CD14-positive monocyte (primary cell): ENCODE measurements at regions of chr2 and their contacts with region 1.

Region 1: DNA sequence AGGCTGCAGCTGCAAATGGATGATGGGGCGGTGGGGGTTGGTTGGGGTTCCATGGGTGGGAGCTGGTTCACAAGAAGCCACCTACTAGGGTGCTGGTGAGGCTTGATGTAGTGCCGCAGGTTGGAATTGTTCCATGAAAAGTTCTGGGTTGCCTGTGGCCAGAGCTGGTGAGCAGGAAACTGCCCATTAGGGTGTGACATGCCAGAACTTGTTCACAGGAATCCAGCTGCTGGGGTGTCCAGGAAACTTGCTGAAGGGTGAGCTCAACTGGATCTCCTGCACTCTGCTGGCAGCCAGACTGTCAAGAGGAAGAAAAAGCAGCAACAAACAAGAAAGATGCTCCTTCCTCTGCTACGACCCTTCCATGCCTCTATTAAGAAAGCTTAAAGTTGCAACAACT is 48.8 kb downstream of the MAP3K20 start:
- DNase-seq: no peak
- H3K4me3 ChIP-seq: peak overlapping the region in 1 of 3 experiments; percentile 14
- H3K4me3 Mint-ChIP-seq: peak overlapping the region in 1 of 2 donors; percentile 11
- H3K27ac ChIP-seq: no peak overlapping the region
- H3K27ac Mint-ChIP-seq: peak overlapping the region in 1 of 7 donors; percentile 41
- H3K4me1 ChIP-seq: peaks cover 36 to 45% of the 10 kb centered on the region in 2 donors
- H3K4me1 Mint-ChIP-seq: peaks cover 50% of the 10 kb centered on the region
- H3K27me3 ChIP-seq: peaks cover 0 to 1% of the 10 kb centered on the region in 2 donors
- H3K27me3 Mint-ChIP-seq: peaks cover 7 to 17% (median 8%) of the 10 kb centered on the region in 3 donors
- CTCF ChIP-seq: no peak

Region 2: DNA sequence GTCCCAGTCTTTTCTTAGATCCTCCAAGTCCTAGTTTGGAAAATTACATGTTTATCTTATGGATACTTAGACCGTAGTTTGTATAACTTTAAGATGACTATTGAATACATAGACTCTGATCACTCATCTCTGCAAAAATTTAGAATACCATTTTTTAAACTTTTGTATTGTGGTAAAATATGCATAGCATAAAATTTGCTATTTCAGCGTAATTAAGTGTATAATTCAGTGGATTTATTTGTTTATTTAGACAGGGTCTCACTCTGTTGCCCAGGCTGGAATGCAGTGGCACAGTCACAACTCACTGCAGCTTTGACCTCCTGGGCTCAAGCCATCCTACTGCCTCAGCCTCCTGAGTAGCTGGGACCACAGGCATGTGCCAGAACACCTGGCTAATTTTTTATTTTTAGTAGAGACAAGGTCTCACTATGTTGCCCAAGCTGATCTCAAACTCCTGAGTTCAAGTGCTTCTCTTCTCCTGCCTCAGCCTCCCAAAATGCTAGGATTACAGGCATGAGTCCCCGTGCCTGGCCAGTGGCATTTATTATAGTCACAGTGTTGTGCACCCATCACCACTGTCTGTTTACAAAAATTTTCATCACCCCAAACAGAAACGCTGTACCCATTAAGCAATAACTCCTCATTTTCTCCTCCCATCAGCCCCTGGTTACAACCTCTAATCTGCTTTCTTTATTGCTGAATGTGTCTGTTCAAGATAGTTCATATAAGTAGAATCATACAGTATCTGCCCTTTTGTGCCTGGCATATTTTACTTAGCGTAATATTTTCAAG is 41.2 kb after region 1 on chr2:
- intact Hi-C with region 1: loop called in 1 of 2 experiments (anchors 5 kb)
- DNase-seq: no peak
- H3K4me3 ChIP-seq: no peak overlapping the region
- H3K4me3 Mint-ChIP-seq: no peak overlapping the region
- H3K27ac ChIP-seq: no peak overlapping the region
- H3K27ac Mint-ChIP-seq: no peak overlapping the region
- H3K4me1 ChIP-seq: peaks cover 8 to 9% of the 10 kb centered on the region in 2 donors
- H3K4me1 Mint-ChIP-seq: peaks cover 13% of the 10 kb centered on the region
- H3K27me3 ChIP-seq: no peaks in the 10 kb centered on the region
- H3K27me3 Mint-ChIP-seq: no peaks in the 10 kb centered on the region
- CTCF ChIP-seq: no peak